WTC11 (cell line): ENCODE measurements at regions of chr3 and their contacts with region 1.

Region 1: GRCh38 chr3:140128631-140129030 is 193.6 kb downstream of the CLSTN2 start:
- DNase-seq: peak; percentile 80
- ATAC-seq: peak; percentile 99
- H3K4me3 Mint-ChIP-seq: no peak overlapping the region
- H3K27ac Mint-ChIP-seq: no peak overlapping the region
- H3K4me1 Mint-ChIP-seq: peaks cover 16% of the 10 kb centered on the region
- H3K27me3 Mint-ChIP-seq: no peaks in the 10 kb centered on the region; the same call in 1 of the 2 replicates
- CTCF ChIP-seq: peak; percentile 47; the same call in 1 of the 2 replicates

Region 2: DNA sequence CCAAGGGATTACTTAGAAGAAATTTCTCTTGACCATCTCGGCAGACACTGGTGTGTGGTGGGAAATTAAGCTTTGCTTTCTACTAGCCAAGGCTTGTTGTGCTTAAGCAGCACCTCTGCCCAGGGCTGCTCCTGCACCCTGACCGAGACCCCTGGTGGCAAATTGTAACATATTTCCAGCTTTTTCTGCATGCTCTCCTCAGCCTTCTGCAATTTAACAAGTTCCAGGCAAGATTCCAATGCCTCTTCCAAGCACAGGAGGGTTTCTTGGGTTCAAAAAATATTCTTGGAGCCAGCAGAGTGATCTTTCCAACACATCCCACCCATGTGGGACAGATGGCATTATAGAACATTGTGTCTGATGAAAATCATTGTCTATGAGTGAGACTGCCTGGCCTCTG is 16.9 kb after region 1 on chr3:
- CTCF ChIA-PET with region 1: interaction called, 13 read pairs
- POLR2A ChIA-PET with region 1: no interaction called
- DNase-seq: no peak
- ATAC-seq: 0 out of 2 replicates have a peak, but pooled peaks have one; percentile 38
- H3K4me3 Mint-ChIP-seq: no peak overlapping the region
- H3K27ac Mint-ChIP-seq: no peak overlapping the region
- H3K4me1 Mint-ChIP-seq: no peaks in the 10 kb centered on the region
- H3K27me3 Mint-ChIP-seq: no peaks in the 10 kb centered on the region
- CTCF ChIP-seq: no peak

Region 3: GRCh38 chr3:140206196-140207048 is 77.8 kb after region 1 on chr3:
- CTCF ChIA-PET with region 1: interaction called, 14 read pairs
- POLR2A ChIA-PET with region 1: no interaction called
- DNase-seq: peak; percentile 38
- ATAC-seq: peak; percentile 51
- H3K4me3 Mint-ChIP-seq: no peak overlapping the region
- H3K27ac Mint-ChIP-seq: no peak overlapping the region
- H3K4me1 Mint-ChIP-seq: peaks cover 58% of the 10 kb centered on the region
- H3K27me3 Mint-ChIP-seq: peaks cover 16% of the 10 kb centered on the region
- CTCF ChIP-seq: no peak

Region 4: GRCh38 chr3:140216249-140216648 is 87.6 kb after region 1 on chr3:
- CTCF ChIA-PET with region 1: interaction called, 21 read pairs
- POLR2A ChIA-PET with region 1: no interaction called
- DNase-seq: no peak
- ATAC-seq: peak; percentile 48
- H3K4me3 Mint-ChIP-seq: no peak overlapping the region
- H3K27ac Mint-ChIP-seq: no peak overlapping the region
- H3K4me1 Mint-ChIP-seq: peaks cover 34% of the 10 kb centered on the region
- H3K27me3 Mint-ChIP-seq: no peaks in the 10 kb centered on the region; the same call in 1 of the 2 replicates
- CTCF ChIP-seq: 0 out of 2 replicates have a peak, but pooled peaks have one; percentile 16